SK-N-SH (cell line): ENCODE measurements at regions of chr17 and their contacts with region 1.

Region 1: GRCh38 chr17:37239690-37240334 is 136.0 kb upstream of the C17orf78 start:
- DNase-seq: peak; percentile 33
- H3K4me3 ChIP-seq: no peak overlapping the region
- H3K27ac ChIP-seq: no peak overlapping the region
- H3K4me1 ChIP-seq: no peaks in the 10 kb centered on the region
- H3K27me3 ChIP-seq: no peaks in the 10 kb centered on the region
- CTCF ChIP-seq: peak; percentile 88
- EP300 ChIP-seq: no peak
- RAD21 ChIP-seq: peak; percentile 78

Region 2: GRCh38 chr17:37221865-37222264 is 17.9 kb before region 1 on chr17:
- CTCF ChIA-PET with region 1: interaction called, 26 read pairs
- POLR2A ChIA-PET with region 1: no interaction called
- DNase-seq: no peak
- H3K4me3 ChIP-seq: no peak overlapping the region
- H3K27ac ChIP-seq: no peak overlapping the region
- H3K4me1 ChIP-seq: peaks cover 0 to 9% of the 10 kb centered on the region in 2 experiments; a peak in 2 of 4 replicates
- H3K27me3 ChIP-seq: no peaks in the 10 kb centered on the region
- CTCF ChIP-seq: peak; percentile 32
- EP300 ChIP-seq: no peak
- RAD21 ChIP-seq: no peak

Region 3: GRCh38 chr17:37255432-37255831 is 15.6 kb after region 1 on chr17:
- CTCF ChIA-PET with region 1: interaction called, 12 read pairs
- POLR2A ChIA-PET with region 1: no interaction called
- DNase-seq: no peak
- H3K4me3 ChIP-seq: no peak overlapping the region
- H3K27ac ChIP-seq: no peak overlapping the region
- H3K4me1 ChIP-seq: no peaks in the 10 kb centered on the region; a peak in 1 of 4 replicates
- H3K27me3 ChIP-seq: no peaks in the 10 kb centered on the region
- CTCF ChIP-seq: no peak
- EP300 ChIP-seq: no peak
- RAD21 ChIP-seq: no peak